ENCODE measurements at regions of chr1 and their contacts with region 1.

Region 1: DNA sequence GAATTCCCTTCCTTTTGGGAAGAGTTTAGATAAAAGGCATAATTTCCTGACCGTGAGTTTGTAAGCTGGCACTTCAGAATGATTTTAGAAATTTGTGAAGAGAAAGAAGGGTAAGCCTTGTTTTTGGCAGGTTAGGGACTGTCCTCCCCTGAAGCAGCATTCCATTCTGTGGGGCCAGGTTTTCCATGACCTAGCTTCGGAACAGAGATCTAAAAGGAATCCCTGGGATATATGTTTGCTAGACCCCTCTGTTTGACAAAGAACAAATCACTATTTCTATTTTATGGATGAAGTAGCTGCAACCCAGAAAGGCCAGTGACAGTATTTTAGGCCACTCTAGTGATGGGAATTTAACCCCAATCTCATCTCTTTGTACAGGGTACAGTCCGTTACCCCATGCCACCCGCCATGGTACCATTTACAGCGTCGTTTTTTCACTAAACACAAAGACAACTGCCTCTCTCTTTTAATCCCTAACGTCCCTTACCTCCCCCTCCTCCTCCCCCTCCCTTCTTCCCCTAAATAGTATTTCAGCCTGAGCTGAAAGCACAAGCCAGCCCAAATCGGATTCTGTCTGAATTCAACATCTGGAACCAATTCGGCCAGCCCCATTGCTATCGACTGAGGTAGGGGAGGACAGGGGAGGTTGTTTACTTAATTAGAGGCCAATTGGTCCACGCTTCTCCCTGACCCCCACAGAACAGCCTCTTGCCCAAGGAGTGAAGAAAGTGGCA is 23.4 kb upstream of the IKBKE start:
- DNase-seq: no peak
- ATAC-seq: no peak
- H3K4me3 Mint-ChIP-seq: no peak overlapping the region
- H3K27ac Mint-ChIP-seq: no peak overlapping the region
- H3K4me1 Mint-ChIP-seq: no peaks in the 10 kb centered on the region
- H3K27me3 Mint-ChIP-seq: no peaks in the 10 kb centered on the region
- CTCF ChIP-seq: no peak

Region 2: GRCh38 chr1:206430031-206430983 is 16.5 kb before region 1 on chr1:
- CTCF ChIA-PET with region 1: no interaction called
- POLR2A ChIA-PET with region 1: no interaction called
- intact Hi-C with region 1: loop called (anchors 2 kb)
- DNase-seq: no peak
- ATAC-seq: peak; percentile 21
- H3K4me3 Mint-ChIP-seq: no peak overlapping the region
- H3K27ac Mint-ChIP-seq: no peak overlapping the region
- H3K4me1 Mint-ChIP-seq: no peaks in the 10 kb centered on the region
- H3K27me3 Mint-ChIP-seq: no peaks in the 10 kb centered on the region
- CTCF ChIP-seq: no peak